Spleen (tissue), 13 donors: ENCODE measurements at regions of chr19 and their contacts with region 1.

Region 1: DNA sequence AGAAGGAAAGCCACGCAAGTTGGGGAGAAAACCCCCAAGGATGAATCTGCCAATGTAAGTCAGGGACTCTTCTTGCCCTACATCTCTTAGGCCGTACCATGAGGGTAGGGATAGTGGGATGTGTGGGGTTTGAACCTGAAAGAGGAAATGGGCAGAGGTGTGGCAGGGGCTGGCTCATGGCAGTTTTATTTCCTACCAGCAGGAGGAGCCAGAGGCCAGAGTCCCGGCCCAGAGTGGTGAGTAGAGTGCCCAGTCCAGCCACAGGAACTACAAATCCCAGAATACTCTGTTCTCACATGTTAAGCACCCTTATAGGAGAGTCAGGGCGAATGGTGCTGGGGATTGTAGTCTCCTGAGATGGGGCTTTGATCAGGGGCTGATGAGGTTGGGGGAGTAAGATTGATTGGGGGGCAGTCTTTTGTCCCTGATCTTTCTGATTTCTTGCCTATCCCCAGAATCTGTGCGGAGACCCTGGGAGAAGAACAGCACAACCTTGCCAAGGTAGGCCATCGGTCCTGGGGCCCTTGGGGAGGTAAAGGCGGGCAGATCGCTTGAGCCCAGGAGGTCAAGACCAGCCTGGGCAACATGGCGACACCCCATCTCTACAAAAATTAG is 16.5 kb downstream of the VASP start:
- DNase-seq: peak; percentile 91
- H3K4me3 ChIP-seq: no peak overlapping the region
- H3K27ac ChIP-seq: peak overlapping the region in 5 of 8 donors; percentile 53 to 63 (median 55)
- H3K4me1 ChIP-seq: peaks cover 6 to 88% (median 44%) of the 10 kb centered on the region in 6 donors
- H3K27me3 ChIP-seq: no peaks in the 10 kb centered on the region
- CTCF ChIP-seq: peak; percentile 76 to 97 (median 94)
- POLR2A ChIP-seq: no peak

Region 2: DNA sequence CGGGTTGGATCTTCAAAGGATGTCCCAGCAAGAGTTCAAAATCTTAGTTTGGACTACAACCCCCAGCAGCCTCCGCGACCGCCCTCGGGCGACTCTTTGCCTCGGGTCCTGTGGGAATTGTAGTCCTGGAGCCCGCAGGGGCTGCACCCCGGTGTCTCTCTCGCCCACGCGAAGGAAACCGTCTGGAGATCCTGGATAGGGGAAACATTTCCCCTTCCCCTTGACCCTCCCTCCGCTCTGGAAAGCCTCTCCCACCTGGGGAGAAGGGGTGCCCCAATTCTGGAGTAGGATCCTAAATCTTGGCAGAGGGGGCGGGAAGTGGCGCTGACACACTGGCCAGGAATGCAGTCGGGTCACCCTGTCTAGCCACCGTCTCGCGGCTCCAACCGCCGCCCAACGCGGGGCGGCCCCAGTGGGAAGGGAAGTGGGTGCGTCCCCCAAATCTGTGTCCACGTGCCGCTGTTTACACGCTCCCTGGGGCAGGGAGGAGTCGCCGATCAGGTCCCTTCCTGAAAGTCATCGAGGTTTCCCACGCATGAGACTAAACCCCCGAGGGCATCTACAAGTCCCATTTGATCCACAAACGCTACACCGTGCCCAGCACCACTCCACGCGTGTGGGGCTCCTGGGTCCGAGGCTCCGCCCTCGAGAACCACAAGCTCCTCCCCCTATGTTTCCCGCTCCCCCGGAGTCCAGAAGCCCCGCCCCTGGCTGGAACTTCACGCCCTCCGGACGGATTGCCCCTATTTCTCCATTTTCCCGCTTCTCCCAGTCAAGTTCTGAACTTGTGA is 118.1 kb before region 1 on chr19:
- intact Hi-C with region 1: no loop called
- DNase-seq: peak; percentile 95
- H3K4me3 ChIP-seq: peak overlapping the region; percentile 74 to 89 (median 82)
- H3K27ac ChIP-seq: peak overlapping the region; percentile 78 to 96 (median 91)
- H3K4me1 ChIP-seq: peaks cover 22 to 86% (median 60%) of the 10 kb centered on the region in 6 donors
- H3K27me3 ChIP-seq: peaks cover 0 to 38% (median 10%) of the 10 kb centered on the region in 7 donors
- CTCF ChIP-seq: no peak
- POLR2A ChIP-seq: no peak

Region 3: DNA sequence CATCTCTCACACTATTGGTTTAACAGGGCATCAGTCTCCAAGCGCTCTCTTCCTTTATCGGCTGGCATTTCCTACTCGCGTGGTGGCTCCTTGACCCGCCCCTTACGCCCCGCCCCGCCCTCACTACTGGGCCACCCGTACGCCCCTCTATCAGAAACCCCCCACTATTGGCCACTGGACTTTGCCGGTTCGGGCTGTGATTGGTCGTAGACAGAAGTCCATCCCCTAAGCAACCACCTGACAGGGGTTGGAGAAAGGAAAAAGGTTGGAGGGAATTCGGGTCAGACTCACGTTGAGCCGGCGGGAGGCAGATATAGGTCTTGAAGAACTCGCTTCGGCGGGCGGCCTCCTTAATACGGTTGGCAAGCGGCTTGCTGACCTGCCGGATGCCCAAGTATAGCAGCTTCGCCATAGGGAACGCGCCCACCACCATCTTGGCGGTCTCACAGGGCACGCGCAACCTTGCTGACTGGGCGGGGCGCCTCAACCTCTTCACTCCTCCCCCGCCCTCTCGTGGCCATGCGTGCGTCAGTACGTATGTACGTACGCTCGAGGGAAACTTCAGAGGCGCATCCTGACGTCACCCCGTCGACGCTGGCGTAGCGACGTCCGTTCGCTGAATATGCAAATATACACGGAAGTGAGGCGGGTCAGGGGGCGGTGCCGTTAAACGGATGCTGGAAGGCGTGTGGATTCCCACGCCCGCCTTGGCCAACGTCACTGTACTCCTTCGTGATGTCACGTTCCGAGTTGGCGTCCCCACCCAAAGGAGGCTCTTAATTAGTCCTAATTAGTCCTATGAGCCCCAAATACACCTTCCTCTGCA is 60.8 kb after region 1 on chr19 and contains the start of gene OPA3:
- intact Hi-C with region 1: loop called (anchors 5 kb)
- DNase-seq: peak; percentile 100
- H3K4me3 ChIP-seq: peak within 1 kb of the TSS; percentile 42 to 74 (median 64)
- H3K27ac ChIP-seq: peak within 1 kb of the TSS; percentile 88 to 99 (median 98)
- H3K4me1 ChIP-seq: peaks cover 4 to 36% (median 17%) of the 10 kb centered on the region in 6 donors
- H3K27me3 ChIP-seq: no peaks in the 10 kb centered on the region
- CTCF ChIP-seq: peak in 7 of 11 experiments; percentile 25 to 49 (median 38)
- POLR2A ChIP-seq: peak; percentile 42 to 45 (median 45)
- total RNA-seq, gene OPA3: 13.6 to 18.4 (median 16.7) TPM